Right ventricle myocardium inferior (tissue), 1 donor: ENCODE measurements at regions of chr6 and their contacts with region 1.

Region 1: DNA sequence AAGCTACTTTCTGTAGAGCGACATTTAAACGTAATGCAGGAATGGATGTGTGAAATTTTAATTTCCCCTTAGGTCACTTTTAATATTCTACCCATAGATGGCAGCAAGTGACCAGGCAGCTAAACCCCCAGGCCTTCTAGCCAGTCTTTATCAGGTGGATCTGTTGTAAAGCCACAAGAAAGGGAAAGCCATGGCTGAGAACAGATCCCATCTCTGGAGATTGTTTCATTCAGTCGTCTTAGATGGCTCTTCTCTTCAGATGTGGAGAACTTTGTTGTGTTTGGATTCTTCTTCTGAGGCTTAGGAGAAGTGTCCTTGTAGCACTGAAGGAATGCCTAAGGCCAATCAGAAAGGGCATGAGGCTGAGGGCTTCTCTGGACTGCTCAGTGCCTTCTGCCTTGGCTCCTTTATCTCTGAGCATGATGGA is 15.8 kb upstream of the RNF182 start:
- DNase-seq: no peak
- ATAC-seq: no peak

Region 2: DNA sequence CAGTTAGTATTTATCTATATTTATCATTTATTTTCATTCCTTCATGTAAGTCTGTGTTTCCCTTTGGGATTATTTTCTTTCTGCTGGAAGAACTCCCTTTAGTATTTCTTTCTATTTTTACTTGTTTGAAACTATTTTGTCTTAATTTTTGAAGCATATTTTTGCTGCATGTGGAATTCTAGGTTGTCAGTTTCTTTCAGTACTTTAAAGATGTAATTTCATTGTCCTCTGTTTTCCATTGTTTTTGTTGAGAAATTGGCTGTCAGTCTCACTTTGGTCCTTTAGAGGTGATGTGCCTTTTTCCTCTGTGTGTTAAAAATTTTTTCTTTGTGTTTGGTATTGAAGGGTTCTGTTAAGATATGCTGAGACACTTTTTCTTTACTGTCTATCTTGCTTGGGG is 32.9 kb after region 1 on chr6:
- intact Hi-C with region 1: no loop called
- DNase-seq: no peak
- ATAC-seq: no peak

Region 3: DNA sequence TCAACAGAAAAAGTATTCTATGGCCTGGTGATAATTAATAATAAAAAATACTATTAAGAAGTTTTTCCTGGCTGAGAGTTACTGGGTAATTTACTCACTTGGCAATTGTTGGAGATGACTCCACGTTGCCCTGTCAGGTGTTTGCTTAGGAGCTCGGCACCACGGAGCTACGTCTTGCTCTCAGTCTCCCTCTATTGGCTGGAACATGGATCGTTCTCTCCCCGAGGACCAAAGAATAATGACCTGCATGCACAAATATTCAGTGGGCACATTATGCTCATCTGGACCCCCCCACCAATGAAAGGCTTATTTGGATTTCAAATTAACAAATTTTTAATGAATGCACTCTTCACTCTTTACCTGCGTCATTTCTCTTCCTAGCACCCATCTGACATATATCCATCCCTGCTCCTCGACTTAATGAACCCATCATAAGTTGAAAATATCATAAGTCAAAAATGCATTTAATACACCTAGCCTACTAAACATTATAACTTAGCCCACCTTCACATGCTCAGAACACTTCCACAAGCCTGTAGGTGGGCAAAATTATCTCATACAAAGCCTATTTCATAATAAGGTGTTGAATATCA is 137.6 kb after region 1 on chr6:
- intact Hi-C with region 1: loop called (anchors 5 kb)
- DNase-seq: no peak
- ATAC-seq: no peak

Region 4: DNA sequence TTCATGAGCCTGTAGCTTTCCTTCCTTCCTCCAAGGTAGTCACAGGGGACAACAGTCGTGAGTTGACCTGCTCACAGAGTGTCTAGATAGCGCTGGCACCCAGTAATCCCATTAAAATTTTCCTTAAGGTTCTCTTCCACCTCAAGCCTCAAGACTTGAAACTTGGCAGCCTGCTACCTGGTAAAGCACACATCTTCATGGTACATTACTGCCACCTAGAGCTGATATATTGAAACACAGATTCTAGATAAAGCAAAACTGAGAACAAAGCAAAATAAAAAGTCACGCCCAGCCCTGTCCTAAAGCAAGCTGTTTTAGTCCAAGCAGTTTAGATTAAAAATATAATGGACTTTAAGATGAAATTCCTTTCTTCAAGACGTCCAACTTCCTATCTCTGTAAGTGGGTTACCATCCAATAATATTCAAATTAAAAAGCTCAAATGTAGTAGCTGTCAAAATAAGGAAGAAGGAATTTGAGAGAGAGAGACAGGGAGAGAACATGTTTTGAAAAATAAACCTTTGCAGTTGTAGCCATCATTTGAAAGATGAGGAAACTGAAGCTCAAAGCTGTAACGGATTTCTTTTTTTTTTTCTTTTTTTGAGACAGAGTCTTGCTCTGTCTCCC is 157.9 kb after region 1 on chr6:
- intact Hi-C with region 1: loop called (anchors 2 kb)
- DNase-seq: no peak
- ATAC-seq: peak; percentile 44

Region 5: DNA sequence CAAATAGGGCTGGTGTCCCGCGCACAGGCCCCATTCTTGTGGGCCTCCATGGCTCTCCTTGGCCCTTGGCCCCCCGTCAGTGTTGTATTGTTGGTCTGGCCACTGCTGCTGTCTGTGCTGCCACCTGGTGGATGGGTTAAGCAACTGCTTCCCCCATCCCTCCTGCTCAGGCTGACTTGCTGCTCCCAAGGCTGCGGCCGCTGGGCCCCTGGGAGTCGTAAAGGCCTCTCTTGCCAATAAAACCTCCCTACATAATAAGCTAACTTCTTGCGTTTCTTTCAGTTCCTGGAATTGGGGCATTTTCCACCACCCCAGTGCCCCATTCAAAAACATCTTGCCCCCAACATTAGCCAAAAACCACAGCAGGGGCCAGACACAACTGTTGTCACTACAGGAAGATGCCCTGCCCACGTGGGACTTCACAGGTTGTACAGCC is 235.7 kb after region 1 on chr6:
- intact Hi-C with region 1: loop called (anchors 2 kb)
- DNase-seq: peak; percentile 81
- ATAC-seq: peak; percentile 69